Mammary epithelial cell (primary cell): ENCODE measurements at regions of chr12 and their contacts with region 1.

Region 1: GRCh38 chr12:27922501-27923139 is 49.9 kb downstream of the PTHLH start:
- DNase-seq: peak; percentile 86
- H3K4me3 ChIP-seq: no peak overlapping the region
- H3K27ac ChIP-seq: no peak overlapping the region
- H3K4me1 ChIP-seq: peaks cover 13% of the 10 kb centered on the region
- H3K27me3 ChIP-seq: no peaks in the 10 kb centered on the region
- CTCF ChIP-seq: no peak

Region 2: GRCh38 chr12:27653661-27654060 is 269.0 kb before region 1 on chr12:
- CTCF ChIA-PET with region 1: no interaction called
- dilution Hi-C with region 1: no loop called
- in situ Hi-C with region 1: no loop called
- intact Hi-C with region 1: no loop called
- DNase-seq: no peak
- H3K4me3 ChIP-seq: no peak overlapping the region
- H3K27ac ChIP-seq: no peak overlapping the region
- H3K4me1 ChIP-seq: peaks cover 10% of the 10 kb centered on the region
- H3K27me3 ChIP-seq: no peaks in the 10 kb centered on the region
- CTCF ChIP-seq: no peak

Region 3: GRCh38 chr12:27870939-27871338 is 51.7 kb before region 1 on chr12:
- CTCF ChIA-PET with region 1: no interaction called
- dilution Hi-C with region 1: no loop called
- in situ Hi-C with region 1: no loop called
- intact Hi-C with region 1: no loop called
- DNase-seq: peak; percentile 41
- H3K4me3 ChIP-seq: no peak overlapping the region
- H3K27ac ChIP-seq: no peak overlapping the region
- H3K4me1 ChIP-seq: peaks cover 9% of the 10 kb centered on the region
- H3K27me3 ChIP-seq: no peaks in the 10 kb centered on the region
- CTCF ChIP-seq: no peak

Region 4: GRCh38 chr12:27906658-27907473 is 15.8 kb before region 1 on chr12:
- CTCF ChIA-PET with region 1: no interaction called
- dilution Hi-C with region 1: no loop called
- in situ Hi-C with region 1: no loop called
- intact Hi-C with region 1: loop called (anchors 2 kb)
- DNase-seq: no peak
- H3K4me3 ChIP-seq: no peak overlapping the region
- H3K27ac ChIP-seq: no peak overlapping the region
- H3K4me1 ChIP-seq: peaks cover 9% of the 10 kb centered on the region
- H3K27me3 ChIP-seq: no peaks in the 10 kb centered on the region
- CTCF ChIP-seq: no peak

Region 5: DNA sequence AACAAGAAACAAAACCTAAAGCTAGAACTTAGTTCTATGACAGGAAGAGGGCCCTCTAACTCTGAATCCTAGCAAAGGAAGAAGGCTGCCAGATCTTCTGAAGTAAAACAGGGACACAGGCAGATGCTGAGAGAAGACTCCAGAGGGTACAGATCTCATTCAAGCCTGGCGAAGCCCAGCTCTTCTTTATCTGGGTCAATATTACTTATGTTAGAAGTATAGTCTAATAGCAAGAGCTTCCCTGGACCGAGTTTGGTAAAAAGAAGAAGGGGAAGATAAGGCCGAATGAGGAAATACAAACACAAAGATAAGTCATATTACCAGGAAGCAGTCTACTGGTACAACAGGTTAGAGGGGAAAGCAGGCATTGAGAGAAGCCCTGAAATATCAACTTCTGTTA is 187.7 kb after region 1 on chr12:
- CTCF ChIA-PET with region 1: no interaction called
- dilution Hi-C with region 1: no loop called
- in situ Hi-C with region 1: no loop called
- intact Hi-C with region 1: no loop called
- DNase-seq: no peak
- H3K4me3 ChIP-seq: no peak overlapping the region
- H3K27ac ChIP-seq: no peak overlapping the region
- H3K4me1 ChIP-seq: peaks cover 23% of the 10 kb centered on the region
- H3K27me3 ChIP-seq: no peaks in the 10 kb centered on the region
- CTCF ChIP-seq: no peak